Endothelial cell of umbilical vein (primary cell): ENCODE measurements at regions of chr9 and their contacts with region 1.

Region 1: DNA sequence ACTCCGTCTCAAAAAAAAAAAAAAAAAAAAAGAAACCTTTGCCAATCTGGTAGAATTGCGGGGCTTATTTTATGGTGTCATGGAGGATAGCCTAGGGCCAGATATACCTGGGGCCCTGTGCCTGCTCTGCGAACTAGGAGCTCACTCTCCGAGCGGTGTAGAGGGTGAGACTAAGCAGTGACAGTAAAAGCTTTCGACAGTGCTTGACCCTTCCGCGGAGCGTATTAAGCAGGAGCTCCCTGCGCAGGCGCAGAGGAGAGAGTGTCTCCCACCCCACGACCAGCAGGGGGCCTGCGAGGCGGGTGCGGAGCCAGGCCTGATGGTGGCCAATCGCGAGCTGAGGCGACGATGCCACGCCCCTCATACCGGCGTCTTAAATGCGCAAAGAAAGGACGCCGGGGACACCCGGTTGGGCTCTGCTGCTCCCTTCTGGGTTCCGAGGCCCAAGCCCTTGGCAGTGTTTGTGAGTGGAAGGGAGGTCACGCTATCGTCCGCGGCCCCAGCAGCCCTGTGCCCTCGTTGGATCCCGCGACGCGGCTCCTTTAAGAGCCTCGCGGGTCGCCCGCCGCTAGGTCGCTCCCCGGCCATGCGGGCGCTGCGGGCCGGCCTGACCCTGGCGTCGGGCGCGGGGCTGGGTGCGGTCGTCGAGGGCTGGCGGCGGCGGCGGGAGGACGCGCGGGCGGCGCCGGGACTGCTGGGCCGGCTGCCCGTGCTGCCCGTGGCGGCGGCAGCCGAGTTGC is at the start of gene ENDOG:
- DNase-seq: peak; percentile 99
- H3K4me3 ChIP-seq: peak within 1 kb of the TSS in 2 of 3 experiments; percentile 57 to 63
- H3K27ac ChIP-seq: no peak within 1 kb of the TSS
- H3K4me1 ChIP-seq: peaks cover 6% of the 10 kb centered on the region
- H3K27me3 ChIP-seq: no peaks in the 10 kb centered on the region
- CTCF ChIP-seq: peak; percentile 99
- POLR2A ChIP-seq: peak; percentile 94
- total RNA-seq, gene ENDOG: 17.9 and 18.0 TPM in 2 replicates

Region 2: GRCh38 chr9:128723866-128724743 is 94.2 kb before region 1 on chr9 and contains the start of gene ZDHHC12:
- CTCF ChIA-PET with region 1: interaction called, 5 read pairs
- POLR2A ChIA-PET with region 1: no interaction called
- dilution Hi-C with region 1: no loop called
- intact Hi-C with region 1: loop called (anchors 5 kb)
- DNase-seq: peak; percentile 95
- H3K4me3 ChIP-seq: peak within 1 kb of the TSS; percentile 53 to 69 (median 58)
- H3K27ac ChIP-seq: no peak within 1 kb of the TSS
- H3K4me1 ChIP-seq: peaks cover 5% of the 10 kb centered on the region
- H3K27me3 ChIP-seq: no peaks in the 10 kb centered on the region
- CTCF ChIP-seq: no peak
- POLR2A ChIP-seq: peak; percentile 94
- total RNA-seq, gene ZDHHC12: 28.8 and 31.1 TPM in 2 replicates

Region 3: DNA sequence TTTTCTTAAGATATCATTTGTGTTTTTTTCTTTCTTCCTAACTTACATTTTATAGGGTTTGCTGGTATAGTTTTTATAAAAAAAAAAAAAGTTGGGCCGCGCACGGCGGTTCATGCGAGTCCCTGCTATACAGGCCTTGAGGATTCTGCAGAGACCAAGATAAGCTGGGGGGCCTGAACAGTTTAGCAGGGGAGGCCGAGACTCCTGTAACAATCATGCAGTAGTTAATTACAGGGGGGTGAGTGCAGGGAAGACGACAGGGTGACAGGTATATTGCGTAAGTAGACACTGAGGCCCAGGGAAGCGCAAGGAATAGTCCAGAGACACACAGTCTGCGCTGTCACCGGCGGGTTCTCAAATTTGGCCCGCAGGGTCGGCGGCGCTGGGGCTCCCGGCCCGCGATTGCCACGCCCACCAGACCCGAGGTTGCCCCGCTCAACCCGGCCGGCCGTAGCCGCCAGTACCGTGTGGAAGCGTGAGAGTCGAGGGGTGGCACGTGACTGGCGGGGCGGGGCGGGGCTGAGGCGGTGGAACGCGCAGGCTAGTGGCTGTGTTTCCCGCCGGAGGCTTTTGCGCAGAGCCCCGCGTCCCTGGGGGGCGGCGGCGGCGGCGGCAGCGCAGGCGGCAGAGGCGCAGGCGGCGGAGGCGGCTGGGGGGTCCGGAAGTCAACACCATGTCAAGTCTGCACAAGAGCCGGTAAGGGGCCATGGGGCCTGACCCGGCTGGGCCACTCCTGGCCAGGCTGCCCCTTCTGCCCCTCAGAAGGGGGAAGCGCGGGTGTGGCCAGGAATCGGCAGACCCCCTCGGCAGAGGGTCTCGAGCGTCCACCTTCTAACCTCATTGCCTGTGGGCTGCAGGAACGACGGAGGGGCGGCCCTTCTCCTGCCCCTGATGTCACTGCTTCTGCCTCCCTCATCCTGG is 31.3 kb before region 1 on chr9 and contains the start of gene TBC1D13:
- CTCF ChIA-PET with region 1: interaction called, 9 read pairs
- POLR2A ChIA-PET with region 1: no interaction called
- dilution Hi-C with region 1: no loop called
- intact Hi-C with region 1: loop called (anchors 1 kb)
- DNase-seq: peak; percentile 82
- H3K4me3 ChIP-seq: peak within 1 kb of the TSS; percentile 50 to 94 (median 77)
- H3K27ac ChIP-seq: no peak within 1 kb of the TSS
- H3K4me1 ChIP-seq: peaks cover 11% of the 10 kb centered on the region
- H3K27me3 ChIP-seq: no peaks in the 10 kb centered on the region
- CTCF ChIP-seq: no peak
- POLR2A ChIP-seq: peak; percentile 66
- total RNA-seq, gene TBC1D13: 34.9 and 35.1 TPM in 2 replicates

Region 4: GRCh38 chr9:128927731-128928411 is 109.6 kb after region 1 on chr9:
- CTCF ChIA-PET with region 1: interaction called, 7 read pairs
- POLR2A ChIA-PET with region 1: no interaction called
- dilution Hi-C with region 1: no loop called
- intact Hi-C with region 1: loop called (anchors 1 kb)
- DNase-seq: peak; percentile 65
- H3K4me3 ChIP-seq: no peak overlapping the region
- H3K27ac ChIP-seq: no peak overlapping the region
- H3K4me1 ChIP-seq: no peaks in the 10 kb centered on the region
- H3K27me3 ChIP-seq: no peaks in the 10 kb centered on the region
- CTCF ChIP-seq: peak; percentile 74 to 79
- POLR2A ChIP-seq: no peak